Motor neuron (in vitro differentiated cells): ENCODE measurements at regions of chr2 and their contacts with region 1.

Region 1: DNA sequence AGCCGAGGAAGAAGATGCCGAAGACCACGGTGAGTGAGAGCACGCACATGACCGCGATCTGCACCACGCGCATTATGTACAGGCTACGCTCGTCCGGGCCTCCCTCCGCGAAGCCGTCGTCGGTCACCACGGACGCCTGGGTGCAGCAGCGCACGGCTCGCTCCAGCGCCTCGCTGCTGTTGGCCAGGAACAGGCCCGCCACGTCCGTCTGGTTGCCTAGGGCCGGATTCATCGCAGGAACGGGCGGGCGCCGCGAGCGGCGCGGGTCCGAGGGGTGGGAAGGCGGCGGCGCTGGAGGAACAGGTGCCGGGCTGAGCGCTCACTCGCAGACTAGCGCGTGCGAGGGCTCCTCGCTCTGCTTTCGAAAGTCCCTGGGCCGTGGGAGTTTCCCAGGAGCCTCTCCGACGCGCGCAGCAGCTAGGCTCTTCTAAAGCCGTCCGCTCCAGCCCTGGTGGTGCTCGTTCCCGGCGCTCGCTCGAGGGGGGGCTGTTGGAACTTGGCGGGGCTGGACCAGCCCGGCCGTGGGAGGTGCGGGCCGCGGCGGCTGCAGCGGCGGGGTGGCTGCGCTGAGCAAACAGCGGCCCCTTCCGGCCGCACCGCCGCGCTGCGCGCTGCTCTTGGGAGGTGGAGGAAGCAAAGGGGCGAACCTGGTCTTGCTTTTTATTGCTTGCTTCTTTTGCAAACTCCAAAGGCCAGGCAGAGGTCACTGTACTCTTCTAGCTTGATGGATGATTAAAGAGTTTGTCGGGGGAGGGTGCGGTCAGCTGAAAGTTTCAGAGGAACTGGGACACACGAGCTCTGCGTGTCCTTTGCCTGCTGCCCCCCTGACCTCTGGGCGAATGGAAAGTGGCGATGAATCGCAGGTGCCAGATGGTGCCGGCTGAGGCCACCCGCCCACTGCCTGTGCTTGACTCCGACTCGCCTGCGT is at the start of gene RPRM:
- ATAC-seq: peak; percentile 64 to 89 (median 86)
- H3K4me3 ChIP-seq: peak within 1 kb of the TSS; percentile 50 to 62 (median 56)
- H3K27ac ChIP-seq: peak within 1 kb of the TSS; percentile 75 to 89
- H3K4me1 ChIP-seq: peaks cover 11 to 27% of the 10 kb centered on the region in 2 donors
- total RNA-seq, gene RPRM: 7.8 to 484 (median 81.3) TPM

Region 2: GRCh38 chr2:152717228-152718075 is 761.1 kb before region 1 on chr2 and contains the start of gene PRPF40A:
- in situ Hi-C with region 1: loop called in 1 of 9 experiments (anchors 25 kb)
- ATAC-seq: peak; percentile 68 to 85 (median 82)
- H3K4me3 ChIP-seq: peak within 1 kb of the TSS; percentile 89 to 100 (median 93)
- H3K27ac ChIP-seq: peak within 1 kb of the TSS; percentile 98 to 99
- H3K4me1 ChIP-seq: peaks cover 0 to 16% of the 10 kb centered on the region in 2 donors
- total RNA-seq, gene PRPF40A: 67.7 to 194 (median 89.1) TPM

Region 3: DNA sequence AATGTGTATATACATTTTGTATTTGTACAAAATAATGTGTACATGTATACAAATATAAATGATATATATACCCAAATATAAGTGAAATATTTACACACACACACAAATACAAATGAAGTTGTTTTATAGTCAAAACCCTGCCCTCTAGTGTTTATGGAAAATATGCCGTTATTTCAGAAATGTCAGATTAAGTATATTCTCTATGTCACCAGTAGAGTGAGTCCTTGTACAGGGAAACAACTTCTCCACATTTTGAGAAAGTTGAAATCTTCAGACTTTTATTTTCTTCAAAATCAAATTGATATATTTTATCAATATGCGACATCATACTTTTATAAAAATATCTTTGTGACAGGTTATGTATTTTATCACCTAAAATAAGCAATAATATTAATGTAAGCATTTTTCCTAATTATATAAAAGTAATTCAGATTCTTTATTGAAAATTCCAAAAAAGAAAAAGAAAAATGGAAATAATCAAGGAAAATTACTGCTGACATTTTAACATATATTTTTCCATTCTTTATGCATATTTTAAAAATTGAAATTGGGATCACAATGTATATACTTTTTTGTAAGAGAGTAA is 737.8 kb before region 1 on chr2:
- in situ Hi-C with region 1: loop called in 1 of 9 experiments (anchors 25 kb)
- ATAC-seq: peak in 1 of 8 experiments; percentile 35
- H3K4me3 ChIP-seq: no peak overlapping the region
- H3K27ac ChIP-seq: no peak overlapping the region
- H3K4me1 ChIP-seq: peaks cover 0 to 7% of the 10 kb centered on the region in 2 donors

Region 4: GRCh38 chr2:153163058-153163457 is 315.5 kb before region 1 on chr2:
- in situ Hi-C with region 1: loop called in 3 of 9 experiments (anchors 10 to 25 kb)
- ATAC-seq: peak in 3 of 8 experiments; percentile 48 to 83 (median 56)
- H3K4me3 ChIP-seq: no peak overlapping the region
- H3K27ac ChIP-seq: no peak overlapping the region
- H3K4me1 ChIP-seq: no peaks in the 10 kb centered on the region